H1 (cell line): ENCODE measurements at regions of chr17 and their contacts with region 1.

Region 1: GRCh38 chr17:1365445-1366039 is 34.5 kb downstream of the YWHAE start:
- DNase-seq: peak in 1 of 2 experiments; percentile 34
- H3K4me3 ChIP-seq: no peak overlapping the region
- H3K27ac ChIP-seq: no peak overlapping the region
- H3K4me1 ChIP-seq: peaks cover 0 to 12% (median 3%) of the 10 kb centered on the region in 4 experiments; a peak in 3 of 7 replicates
- H3K27me3 ChIP-seq: no peaks in the 10 kb centered on the region
- CTCF ChIP-seq: peak; percentile 28 to 77 (median 72)
- EP300 ChIP-seq: no peak
- POLR2A ChIP-seq: no peak
- RAD21 ChIP-seq: peak; percentile 76 to 79

Region 2: DNA sequence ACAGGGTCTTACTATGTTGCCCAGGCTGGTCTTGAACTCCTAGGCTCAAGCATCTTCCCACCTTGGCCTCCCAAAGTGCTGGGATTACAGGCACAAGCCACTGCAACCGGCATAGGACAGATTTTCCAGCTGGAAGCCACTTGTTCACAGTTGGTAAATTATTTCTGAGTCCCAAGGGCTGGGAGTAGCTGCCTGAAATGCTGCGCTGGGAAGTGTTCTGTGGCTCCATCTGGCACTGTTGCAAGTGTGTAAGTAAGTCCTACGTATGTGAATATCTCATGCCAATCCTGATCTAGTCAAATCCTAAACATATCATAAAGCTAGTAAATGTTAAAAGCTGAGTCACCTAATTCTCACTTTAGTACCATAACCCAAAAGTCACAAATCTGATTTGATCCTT is 13.6 kb before region 1 on chr17:
- CTCF ChIA-PET with region 1: interaction called, 36 read pairs
- POLR2A ChIA-PET with region 1: interaction called, 8 read pairs
- DNase-seq: no peak
- H3K4me3 ChIP-seq: no peak overlapping the region
- H3K27ac ChIP-seq: no peak overlapping the region
- H3K4me1 ChIP-seq: no peaks in the 10 kb centered on the region
- H3K27me3 ChIP-seq: no peaks in the 10 kb centered on the region
- CTCF ChIP-seq: no peak
- EP300 ChIP-seq: no peak
- POLR2A ChIP-seq: no peak
- RAD21 ChIP-seq: no peak

Region 3: DNA sequence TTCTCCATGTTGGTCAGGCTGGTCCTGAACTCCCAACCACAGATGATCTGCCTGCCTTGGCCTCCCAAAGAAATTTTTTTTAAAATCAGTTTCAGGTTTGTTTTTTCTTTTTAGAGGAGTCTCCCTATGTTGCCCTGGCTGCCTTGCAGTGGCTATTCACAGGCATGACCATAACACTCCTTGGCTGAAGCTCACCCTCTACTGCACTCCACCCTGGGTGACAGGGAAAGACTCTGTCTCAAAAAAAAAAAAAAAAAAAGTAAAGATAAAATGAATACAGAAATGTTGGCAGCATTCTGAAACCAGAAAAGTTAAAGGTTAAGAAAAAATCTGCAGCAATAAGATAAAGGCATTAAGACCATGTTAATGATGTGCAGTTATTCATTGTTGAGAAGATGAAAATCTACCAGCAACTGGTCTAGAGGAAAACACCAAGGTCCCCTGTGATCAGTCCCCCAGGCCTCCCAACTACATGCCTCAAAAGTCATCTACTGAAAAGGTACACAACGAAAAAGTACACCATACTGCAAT is 19.4 kb after region 1 on chr17:
- CTCF ChIA-PET with region 1: interaction called, 35 read pairs
- POLR2A ChIA-PET with region 1: interaction called, 10 read pairs
- DNase-seq: no peak
- H3K4me3 ChIP-seq: no peak overlapping the region
- H3K27ac ChIP-seq: no peak overlapping the region
- H3K4me1 ChIP-seq: peaks cover 0 to 3% (median 1%) of the 10 kb centered on the region in 4 experiments; a peak in 3 of 7 replicates
- H3K27me3 ChIP-seq: no peaks in the 10 kb centered on the region
- CTCF ChIP-seq: no peak
- EP300 ChIP-seq: no peak
- POLR2A ChIP-seq: no peak
- RAD21 ChIP-seq: no peak

Region 4: DNA sequence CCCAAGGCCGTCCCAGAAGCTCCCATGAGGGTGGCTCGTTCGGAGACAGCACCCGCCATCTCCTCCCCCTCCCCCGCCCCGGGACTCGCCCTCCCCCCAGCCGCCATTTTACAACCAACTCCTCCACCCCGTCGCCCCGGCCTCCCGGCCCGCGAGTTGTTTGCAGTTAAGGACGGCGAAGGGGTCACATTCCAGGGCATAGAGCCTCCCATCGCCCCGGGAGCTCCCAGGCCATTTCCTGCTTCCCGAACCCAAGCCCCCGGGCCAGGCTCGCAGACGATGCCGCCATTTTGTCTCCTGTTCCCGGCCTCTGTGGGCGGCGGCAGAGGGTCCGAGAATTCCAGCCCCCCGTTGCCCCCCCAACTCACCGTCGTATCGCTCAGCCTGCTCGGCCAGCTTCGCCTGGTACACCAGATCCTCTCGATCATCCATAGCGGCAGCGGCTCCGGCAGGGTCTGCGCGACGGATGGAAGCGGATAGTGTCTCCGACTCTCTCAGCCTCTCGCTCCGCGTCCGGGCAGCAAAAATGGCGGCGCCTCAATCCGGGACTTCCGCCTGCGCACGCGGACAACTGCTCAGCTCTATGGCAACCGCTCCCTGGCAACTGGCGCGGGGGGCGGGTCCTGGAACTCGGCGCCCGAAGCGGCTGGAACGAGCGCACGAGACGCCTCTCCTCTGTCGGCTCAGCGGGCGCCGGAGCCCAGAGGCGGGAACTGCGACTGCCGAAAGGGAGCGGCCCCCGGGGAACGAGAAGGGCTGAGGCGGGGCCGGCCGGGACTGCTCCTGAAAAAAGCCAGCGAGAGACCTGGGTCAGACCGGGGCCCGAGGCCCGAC is 34.4 kb after region 1 on chr17 and contains the start of gene YWHAE:
- CTCF ChIA-PET with region 1: interaction called, 11 read pairs
- POLR2A ChIA-PET with region 1: interaction called, 23 read pairs
- DNase-seq: peak; percentile 84 to 97
- H3K4me3 ChIP-seq: peak within 1 kb of the TSS; percentile 74 to 100 (median 97)
- H3K27ac ChIP-seq: peak within 1 kb of the TSS; percentile 98
- H3K4me1 ChIP-seq: peaks cover 0 to 5% (median 2%) of the 10 kb centered on the region in 4 experiments; a peak in 5 of 7 replicates
- H3K27me3 ChIP-seq: no peaks in the 10 kb centered on the region; a peak in 1 of 7 replicates
- CTCF ChIP-seq: no peak
- EP300 ChIP-seq: peak in 1 of 2 experiments; percentile 65; a peak in 1 of 3 replicates
- POLR2A ChIP-seq: peak; percentile 91 to 97
- RAD21 ChIP-seq: no peak
- total RNA-seq, gene YWHAE: 1,186 and 1,198 TPM in 2 replicates

Region 5: GRCh38 chr17:1438593-1439083 is 73.1 kb after region 1 on chr17:
- CTCF ChIA-PET with region 1: interaction called, 14 read pairs
- POLR2A ChIA-PET with region 1: interaction called, 5 read pairs
- DNase-seq: no peak
- H3K4me3 ChIP-seq: no peak overlapping the region
- H3K27ac ChIP-seq: no peak overlapping the region
- H3K4me1 ChIP-seq: no peaks in the 10 kb centered on the region
- H3K27me3 ChIP-seq: no peaks in the 10 kb centered on the region
- CTCF ChIP-seq: no peak
- EP300 ChIP-seq: no peak
- POLR2A ChIP-seq: no peak
- RAD21 ChIP-seq: no peak

Region 6: GRCh38 chr17:1474402-1475189 is 109.1 kb after region 1 on chr17:
- CTCF ChIA-PET with region 1: interaction called, 10 read pairs
- POLR2A ChIA-PET with region 1: no interaction called
- DNase-seq: no peak
- H3K4me3 ChIP-seq: no peak overlapping the region
- H3K27ac ChIP-seq: no peak overlapping the region
- H3K4me1 ChIP-seq: no peaks in the 10 kb centered on the region; a peak in 1 of 7 replicates
- H3K27me3 ChIP-seq: no peaks in the 10 kb centered on the region
- CTCF ChIP-seq: no peak
- EP300 ChIP-seq: no peak
- POLR2A ChIP-seq: no peak
- RAD21 ChIP-seq: no peak

Region 7: GRCh38 chr17:1532836-1533602 is 167.5 kb after region 1 on chr17:
- CTCF ChIA-PET with region 1: interaction called, 13 read pairs
- POLR2A ChIA-PET with region 1: interaction called, 3 read pairs
- DNase-seq: peak; percentile 31 to 74
- H3K4me3 ChIP-seq: no peak overlapping the region
- H3K27ac ChIP-seq: no peak overlapping the region
- H3K4me1 ChIP-seq: no peaks in the 10 kb centered on the region
- H3K27me3 ChIP-seq: no peaks in the 10 kb centered on the region
- CTCF ChIP-seq: peak; percentile 81 to 94 (median 83)
- EP300 ChIP-seq: no peak
- POLR2A ChIP-seq: no peak
- RAD21 ChIP-seq: peak; percentile 80 to 84